GM10248 (cell line): ENCODE measurements at regions of chr9 and their contacts with region 1.

Region 1: DNA sequence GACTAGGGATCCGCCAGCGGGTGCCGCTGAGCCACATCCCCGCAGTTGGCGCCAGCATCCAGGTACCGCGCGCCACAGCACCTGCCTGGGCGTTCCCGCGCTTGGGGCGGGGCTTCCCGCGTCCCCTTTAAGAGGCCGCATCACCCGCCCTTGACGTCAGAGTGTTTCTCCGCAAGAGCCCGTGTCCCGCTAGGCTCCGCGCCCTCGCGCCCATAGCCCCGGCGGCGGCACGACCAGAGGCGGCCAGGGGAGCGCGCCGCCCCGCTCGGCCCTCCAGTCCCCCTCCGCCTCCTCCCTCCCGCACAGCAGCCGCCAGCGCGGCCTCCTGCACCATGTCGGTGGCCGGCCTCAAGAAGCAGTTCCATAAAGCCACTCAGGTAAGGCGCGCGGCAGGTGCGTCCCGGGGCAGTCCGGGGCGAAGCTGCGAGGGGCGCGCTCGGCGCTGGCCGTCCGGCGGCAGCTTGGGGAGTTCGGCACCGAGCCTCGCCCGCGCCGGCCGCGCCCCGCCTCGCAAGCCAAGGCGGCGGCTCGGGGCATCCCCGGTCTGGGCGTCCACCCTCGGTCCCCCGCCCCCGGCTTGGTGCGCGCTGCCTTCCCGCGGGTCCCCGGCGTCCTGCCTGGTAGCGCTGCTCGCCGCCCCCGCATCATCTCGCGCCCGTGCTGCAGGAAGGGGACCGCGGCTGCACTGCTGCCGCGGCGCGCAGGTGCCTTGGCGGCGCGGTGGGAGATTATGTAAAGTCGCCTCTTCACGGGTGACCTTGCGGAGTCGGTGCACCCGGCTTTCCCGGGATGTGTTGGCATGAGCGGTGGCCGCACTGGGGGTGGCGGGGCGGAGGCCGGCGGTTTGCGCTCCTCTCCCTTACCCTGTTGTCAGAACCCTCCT is at the start of gene SH3GL2:
- DNase-seq: peak; percentile 18
- CTCF ChIP-seq: no peak

Region 2: DNA sequence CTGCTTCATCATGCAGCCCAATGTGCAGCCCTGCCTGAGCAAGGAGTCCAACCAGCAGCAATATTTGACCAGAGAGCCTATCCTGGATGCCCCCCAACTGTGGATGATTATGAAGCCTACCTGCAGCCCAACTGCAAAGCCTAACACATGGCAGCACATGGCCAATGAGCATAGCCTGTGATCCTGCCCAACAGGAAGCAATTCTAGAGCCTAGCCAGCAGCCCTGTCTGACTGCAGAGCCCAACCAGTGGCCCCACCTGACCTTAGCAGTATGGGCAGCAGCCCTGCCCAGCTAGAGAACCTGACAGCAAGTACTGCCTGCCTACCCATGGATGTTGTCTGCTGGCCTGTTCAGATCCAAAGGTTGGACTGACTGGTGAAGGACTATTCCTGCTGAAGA is 97.6 kb before region 1 on chr9:
- CTCF ChIA-PET with region 1: no interaction called
- POLR2A ChIA-PET with region 1: no interaction called
- DNase-seq: no peak
- CTCF ChIP-seq: no peak

Region 3: GRCh38 chr9:17536027-17536426 is 43.1 kb before region 1 on chr9:
- CTCF ChIA-PET with region 1: no interaction called
- POLR2A ChIA-PET with region 1: no interaction called
- DNase-seq: no peak
- CTCF ChIP-seq: no peak

Region 4: GRCh38 chr9:17594961-17595360 is 15.8 kb after region 1 on chr9:
- CTCF ChIA-PET with region 1: interaction called, 11 read pairs
- POLR2A ChIA-PET with region 1: no interaction called
- DNase-seq: no peak
- CTCF ChIP-seq: no peak

Region 5: GRCh38 chr9:17613763-17614162 is 34.6 kb after region 1 on chr9:
- CTCF ChIA-PET with region 1: no interaction called
- POLR2A ChIA-PET with region 1: no interaction called
- DNase-seq: no peak
- CTCF ChIP-seq: no peak

Region 6: GRCh38 chr9:17630531-17631337 is 51.6 kb after region 1 on chr9:
- CTCF ChIA-PET with region 1: no interaction called
- POLR2A ChIA-PET with region 1: no interaction called
- DNase-seq: no peak
- CTCF ChIP-seq: no peak